ENCODE measurements at regions of chr5 and their contacts with region 1.

Region 1: DNA sequence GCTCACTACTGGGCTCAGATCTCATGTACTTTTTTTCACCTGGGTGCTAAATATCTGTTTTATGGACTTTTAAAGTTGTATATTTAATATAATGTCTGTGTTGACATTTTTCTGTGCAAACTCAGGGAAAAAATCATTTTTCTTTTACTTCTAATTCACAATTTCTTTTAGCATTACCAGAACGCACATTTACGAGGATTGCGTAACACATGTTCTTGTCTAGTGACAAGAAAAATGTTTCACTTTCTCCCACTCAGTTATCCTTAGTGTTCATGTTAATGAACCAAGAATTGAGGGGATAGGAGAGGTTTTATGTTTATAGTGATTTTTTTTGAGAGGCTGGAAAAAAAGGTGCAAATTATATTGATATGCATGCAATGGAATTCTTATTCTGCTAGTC is 86.3 kb upstream of the PJA2 start:
- DNase-seq: no peak

Region 2: DNA sequence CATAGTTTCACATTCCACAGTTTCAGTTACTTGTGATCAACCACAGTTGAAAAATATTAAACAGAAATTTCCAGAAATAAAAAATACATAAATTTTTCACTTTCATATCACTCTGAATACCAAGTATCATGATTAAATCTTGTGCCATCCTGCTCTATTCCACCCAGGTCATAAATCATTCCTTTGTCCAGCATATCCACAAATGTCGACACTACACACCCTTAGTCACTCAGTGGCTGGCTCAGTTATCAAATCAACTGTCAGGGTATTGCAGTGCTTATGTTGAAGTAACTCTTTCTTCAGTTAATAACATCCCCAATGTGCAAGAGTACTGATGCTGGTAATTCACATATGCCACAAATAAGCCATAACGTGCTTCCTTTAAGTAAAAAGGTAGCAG is 1229.9 kb before region 1 on chr5:
- intact Hi-C with region 1: loop called in 1 of 2 experiments (anchors 5 kb)
- DNase-seq: no peak